Gastrocnemius medialis (tissue), 4 donors: ENCODE measurements at regions of chr16 and their contacts with region 1.

Region 1: GRCh38 chr16:6643080-6643686 is 689.5 kb upstream of the RBFOX1 start:
- DNase-seq: no peak
- ATAC-seq: no peak
- H3K4me3 ChIP-seq: no peak overlapping the region
- H3K27ac ChIP-seq: no peak overlapping the region
- H3K4me1 ChIP-seq: no peaks in the 10 kb centered on the region
- H3K27me3 ChIP-seq: no peaks in the 10 kb centered on the region
- CTCF ChIP-seq: peak; percentile 35 to 70 (median 53)
- POLR2A ChIP-seq: no peak

Region 2: GRCh38 chr16:5228369-5228768 is 1414.8 kb before region 1 on chr16:
- in situ Hi-C with region 1: loop called in 2 of 4 experiments (anchors 25 kb)
- intact Hi-C with region 1: no loop called
- DNase-seq: no peak
- ATAC-seq: no peak
- H3K4me3 ChIP-seq: no peak overlapping the region
- H3K27ac ChIP-seq: no peak overlapping the region
- H3K4me1 ChIP-seq: no peaks in the 10 kb centered on the region
- H3K27me3 ChIP-seq: no peaks in the 10 kb centered on the region
- CTCF ChIP-seq: no peak
- POLR2A ChIP-seq: no peak

Region 3: GRCh38 chr16:6656760-6657159 is 13.6 kb after region 1 on chr16:
- in situ Hi-C with region 1: no loop called
- intact Hi-C with region 1: no loop called
- DNase-seq: no peak
- ATAC-seq: no peak
- H3K4me3 ChIP-seq: no peak overlapping the region
- H3K27ac ChIP-seq: no peak overlapping the region
- H3K4me1 ChIP-seq: no peaks in the 10 kb centered on the region
- H3K27me3 ChIP-seq: no peaks in the 10 kb centered on the region
- CTCF ChIP-seq: no peak
- POLR2A ChIP-seq: no peak

Region 4: GRCh38 chr16:6977916-6978315 is 334.7 kb after region 1 on chr16:
- in situ Hi-C with region 1: no loop called
- intact Hi-C with region 1: no loop called
- DNase-seq: no peak
- ATAC-seq: no peak
- H3K4me3 ChIP-seq: no peak overlapping the region
- H3K27ac ChIP-seq: no peak overlapping the region
- H3K4me1 ChIP-seq: no peaks in the 10 kb centered on the region
- H3K27me3 ChIP-seq: no peaks in the 10 kb centered on the region
- CTCF ChIP-seq: no peak
- POLR2A ChIP-seq: no peak